Natural killer cell (primary cell): ENCODE measurements at regions of chr2 and their contacts with region 1.

Region 1: DNA sequence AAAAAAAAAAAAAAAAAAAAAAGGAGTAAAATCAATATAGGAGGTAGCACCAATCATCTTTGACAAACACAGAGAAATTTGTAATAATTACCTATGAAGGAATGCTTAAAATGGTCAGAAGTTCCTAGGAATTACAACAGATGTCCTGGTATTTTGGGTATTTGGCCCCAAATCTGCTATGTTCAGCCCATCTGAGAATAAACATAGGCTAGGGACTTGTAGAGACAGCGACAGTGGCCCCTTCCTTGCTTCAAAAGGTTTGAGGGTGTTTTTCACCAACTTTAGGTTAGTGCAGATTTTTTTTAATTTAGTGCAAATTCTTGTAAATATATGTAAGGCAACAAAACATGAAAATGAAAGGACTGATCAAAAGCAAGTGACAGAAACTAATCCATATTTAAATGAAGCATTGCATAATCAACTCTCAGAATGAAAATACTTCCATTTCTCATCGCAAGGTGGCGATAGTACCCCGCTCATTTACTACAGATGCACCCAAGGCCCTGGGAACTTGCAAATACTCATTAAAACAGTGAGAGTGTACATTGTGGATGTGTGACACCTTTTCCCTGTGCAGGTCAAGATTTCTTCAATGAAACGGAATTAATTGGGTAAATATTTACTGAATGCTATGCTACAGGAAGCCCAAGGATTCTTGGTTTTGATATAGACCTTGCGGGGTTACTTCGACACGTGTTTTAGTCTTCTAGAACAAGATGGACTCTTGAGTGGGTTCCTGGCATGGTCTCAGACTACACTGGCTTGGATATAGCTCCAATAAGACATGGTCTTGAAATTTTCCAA is 44.6 kb downstream of the FAM124B start:
- DNase-seq: peak in 1 of 2 donors; percentile 82
- ATAC-seq: peak; percentile 76 to 82 (median 76)
- H3K4me3 ChIP-seq: no peak overlapping the region
- H3K4me3 Mint-ChIP-seq: no peak overlapping the region
- H3K27ac ChIP-seq: no peak overlapping the region
- H3K27ac Mint-ChIP-seq: no peak overlapping the region
- H3K4me1 ChIP-seq: no peaks in the 10 kb centered on the region
- H3K4me1 Mint-ChIP-seq: no peaks in the 10 kb centered on the region
- H3K27me3 ChIP-seq: no peaks in the 10 kb centered on the region
- H3K27me3 Mint-ChIP-seq: peaks cover 5 to 11% of the 10 kb centered on the region in 2 donors
- CTCF ChIP-seq: peak; percentile 88

Region 2: DNA sequence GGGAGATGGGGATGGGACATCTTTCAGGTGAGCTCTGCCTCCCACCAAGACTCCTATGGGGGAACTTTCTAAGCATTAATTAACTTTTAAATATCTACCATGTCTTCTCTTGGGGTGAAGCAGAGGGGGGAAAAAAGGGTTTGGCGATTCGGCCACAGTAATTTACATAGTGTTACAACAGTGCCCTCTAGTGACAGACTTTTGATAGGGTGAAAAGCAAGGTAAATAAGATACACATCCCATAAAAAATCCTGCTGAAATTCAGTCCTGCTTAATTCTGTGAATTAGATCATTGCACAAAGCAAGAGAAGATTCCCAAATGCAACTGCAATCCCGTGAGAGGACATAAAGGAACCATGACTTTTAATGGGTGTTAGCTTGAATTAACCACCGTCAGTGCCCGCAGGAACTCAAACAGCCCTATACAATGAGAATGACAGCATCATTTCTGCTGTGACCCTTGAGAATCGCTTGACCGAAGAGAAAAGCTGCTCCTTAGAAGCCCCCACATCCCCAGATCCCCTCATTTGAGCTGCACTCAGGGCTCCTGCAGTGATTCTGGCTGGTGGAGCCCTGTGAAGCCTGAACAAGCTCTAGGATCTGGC is 11.8 kb after region 1 on chr2:
- intact Hi-C with region 1: no loop called
- DNase-seq: peak in 1 of 2 donors; percentile 65
- ATAC-seq: peak; percentile 63 to 70 (median 65)
- H3K4me3 ChIP-seq: no peak overlapping the region
- H3K4me3 Mint-ChIP-seq: no peak overlapping the region
- H3K27ac ChIP-seq: no peak overlapping the region
- H3K27ac Mint-ChIP-seq: no peak overlapping the region
- H3K4me1 ChIP-seq: no peaks in the 10 kb centered on the region
- H3K4me1 Mint-ChIP-seq: no peaks in the 10 kb centered on the region
- H3K27me3 ChIP-seq: no peaks in the 10 kb centered on the region
- H3K27me3 Mint-ChIP-seq: peaks cover 0 to 7% of the 10 kb centered on the region in 2 donors
- CTCF ChIP-seq: peak; percentile 69

Region 3: GRCh38 chr2:224449212-224450147 is 92.2 kb after region 1 on chr2:
- intact Hi-C with region 1: loop called (anchors 1 kb)
- DNase-seq: peak in 1 of 2 donors; percentile 44
- ATAC-seq: peak in 1 of 3 donors; percentile 45
- H3K4me3 ChIP-seq: no peak overlapping the region
- H3K4me3 Mint-ChIP-seq: no peak overlapping the region
- H3K27ac ChIP-seq: no peak overlapping the region
- H3K27ac Mint-ChIP-seq: no peak overlapping the region
- H3K4me1 ChIP-seq: no peaks in the 10 kb centered on the region
- H3K4me1 Mint-ChIP-seq: no peaks in the 10 kb centered on the region
- H3K27me3 ChIP-seq: no peaks in the 10 kb centered on the region
- H3K27me3 Mint-ChIP-seq: peaks cover 11 to 29% of the 10 kb centered on the region in 2 donors
- CTCF ChIP-seq: peak; percentile 44

Region 4: GRCh38 chr2:224570328-224570993 is 213.2 kb after region 1 on chr2:
- intact Hi-C with region 1: no loop called
- DNase-seq: no peak
- ATAC-seq: no peak
- H3K4me3 ChIP-seq: no peak overlapping the region
- H3K4me3 Mint-ChIP-seq: peak overlapping the region; percentile 45
- H3K27ac ChIP-seq: no peak overlapping the region
- H3K27ac Mint-ChIP-seq: peak overlapping the region; percentile 6 to 65
- H3K4me1 ChIP-seq: peaks cover 12% of the 10 kb centered on the region
- H3K4me1 Mint-ChIP-seq: peaks cover 73 to 81% of the 10 kb centered on the region in 2 donors
- H3K27me3 ChIP-seq: no peaks in the 10 kb centered on the region
- H3K27me3 Mint-ChIP-seq: no peaks in the 10 kb centered on the region
- CTCF ChIP-seq: no peak

Region 5: DNA sequence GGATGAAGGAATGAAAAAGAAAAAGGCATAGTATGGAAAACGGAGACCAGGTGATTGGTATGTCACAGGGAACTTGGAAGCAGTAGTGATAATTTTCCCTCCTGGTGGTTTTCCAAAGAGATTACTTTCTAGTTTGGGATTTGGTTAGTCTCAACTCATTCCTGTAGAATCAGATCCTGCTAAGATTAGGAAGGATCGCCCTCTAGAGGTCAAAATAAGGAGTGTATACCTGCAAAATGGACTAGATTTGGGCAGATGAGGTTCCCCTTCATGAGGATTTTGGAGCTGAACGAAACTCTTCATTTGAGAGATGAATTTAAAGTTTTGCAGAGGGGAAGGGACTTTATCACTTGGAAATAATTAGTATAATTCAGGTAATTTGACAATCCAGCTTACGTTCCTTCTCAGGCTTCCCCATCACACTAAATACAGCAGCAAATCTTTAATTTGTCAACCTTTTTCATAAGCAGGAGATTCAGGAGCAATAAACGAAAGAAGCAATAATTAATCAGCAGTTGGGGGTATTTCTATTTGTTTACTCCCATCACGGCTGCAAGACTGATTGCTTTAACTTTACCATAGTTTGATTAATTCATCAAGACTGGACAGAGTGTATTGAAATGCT is 293.6 kb after region 1 on chr2:
- intact Hi-C with region 1: loop called (anchors 1 kb)
- DNase-seq: peak in 1 of 2 donors; percentile 75
- ATAC-seq: peak; percentile 60 to 71 (median 63)
- H3K4me3 ChIP-seq: no peak overlapping the region
- H3K4me3 Mint-ChIP-seq: no peak overlapping the region
- H3K27ac ChIP-seq: no peak overlapping the region
- H3K27ac Mint-ChIP-seq: no peak overlapping the region
- H3K4me1 ChIP-seq: no peaks in the 10 kb centered on the region
- H3K4me1 Mint-ChIP-seq: no peaks in the 10 kb centered on the region
- H3K27me3 ChIP-seq: no peaks in the 10 kb centered on the region
- H3K27me3 Mint-ChIP-seq: peaks cover 6% of the 10 kb centered on the region in 2 donors
- CTCF ChIP-seq: peak; percentile 77

Region 6: GRCh38 chr2:224778474-224778877 is 421.2 kb after region 1 on chr2:
- intact Hi-C with region 1: loop called (anchors 1 kb)
- DNase-seq: peak; percentile 31 to 77
- ATAC-seq: peak in 2 of 3 donors; percentile 69 to 74
- H3K4me3 ChIP-seq: no peak overlapping the region
- H3K4me3 Mint-ChIP-seq: no peak overlapping the region
- H3K27ac ChIP-seq: no peak overlapping the region
- H3K27ac Mint-ChIP-seq: peak overlapping the region in 1 of 2 donors; percentile 59
- H3K4me1 ChIP-seq: no peaks in the 10 kb centered on the region
- H3K4me1 Mint-ChIP-seq: peaks cover 0 to 13% of the 10 kb centered on the region in 2 donors
- H3K27me3 ChIP-seq: no peaks in the 10 kb centered on the region
- H3K27me3 Mint-ChIP-seq: no peaks in the 10 kb centered on the region
- CTCF ChIP-seq: peak; percentile 95